ENCODE measurements at regions of chr6 and their contacts with region 1.

Region 1: GRCh38 chr6:138817822-138818308 is 22.0 kb downstream of the ECT2L start:
- DNase-seq: no peak
- H3K4me3 ChIP-seq: no peak overlapping the region
- H3K27ac ChIP-seq: no peak overlapping the region
- H3K4me1 ChIP-seq: no peaks in the 10 kb centered on the region
- H3K27me3 ChIP-seq: no peaks in the 10 kb centered on the region
- CTCF ChIP-seq: no peak

Region 2: GRCh38 chr6:138987640-138988468 is 170.0 kb after region 1 on chr6 and contains the start of gene REPS1:
- CTCF ChIA-PET with region 1: interaction called, 7 read pairs
- POLR2A ChIA-PET with region 1: interaction called, 4 read pairs
- intact Hi-C with region 1: loop called (anchors 1 kb)
- DNase-seq: peak; percentile 95
- H3K4me3 ChIP-seq: peak within 1 kb of the TSS; percentile 72
- H3K27ac ChIP-seq: peak within 1 kb of the TSS; percentile 91
- H3K4me1 ChIP-seq: peaks cover 13% of the 10 kb centered on the region
- H3K27me3 ChIP-seq: no peaks in the 10 kb centered on the region
- CTCF ChIP-seq: peak; percentile 95
- total RNA-seq, gene REPS1: 63.4 and 64.9 TPM in 2 replicates

Region 3: GRCh38 chr6:139109558-139109957 is 291.7 kb after region 1 on chr6:
- CTCF ChIA-PET with region 1: no interaction called
- POLR2A ChIA-PET with region 1: no interaction called
- intact Hi-C with region 1: loop called (anchors 2 kb)
- DNase-seq: peak; percentile 59
- H3K4me3 ChIP-seq: no peak overlapping the region
- H3K27ac ChIP-seq: no peak overlapping the region
- H3K4me1 ChIP-seq: no peaks in the 10 kb centered on the region
- H3K27me3 ChIP-seq: no peaks in the 10 kb centered on the region
- CTCF ChIP-seq: peak; percentile 51

Measured in A673 (cell line).